ENCODE measurements at regions of chr2 and their contacts with region 1.

Region 1: DNA sequence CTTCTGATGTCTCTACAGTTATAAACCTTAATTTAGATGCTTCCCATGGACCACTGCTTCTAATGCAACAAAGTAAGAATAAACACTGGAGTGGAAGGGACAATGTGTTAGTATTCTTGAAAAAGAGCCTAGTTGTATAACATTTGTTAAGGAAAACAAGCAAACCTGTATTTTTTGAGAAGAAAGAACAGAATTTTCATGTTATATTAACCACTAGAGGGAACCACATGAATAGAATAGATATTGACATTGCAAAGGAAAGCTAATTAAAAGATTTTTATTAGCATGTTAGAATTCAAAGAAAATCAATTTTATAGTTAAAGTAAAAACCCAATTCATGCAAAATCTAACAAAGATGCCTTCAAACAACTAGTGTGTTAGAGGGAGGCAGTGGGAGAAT is 151.2 kb upstream of the BARD1 start:
- DNase-seq: peak; percentile 0
- H3K4me3 ChIP-seq: no peak overlapping the region
- H3K27ac ChIP-seq: no peak overlapping the region
- H3K4me1 ChIP-seq: no peaks in the 10 kb centered on the region
- H3K27me3 ChIP-seq: no peaks in the 10 kb centered on the region
- CTCF ChIP-seq: peak; percentile 26

Region 2: DNA sequence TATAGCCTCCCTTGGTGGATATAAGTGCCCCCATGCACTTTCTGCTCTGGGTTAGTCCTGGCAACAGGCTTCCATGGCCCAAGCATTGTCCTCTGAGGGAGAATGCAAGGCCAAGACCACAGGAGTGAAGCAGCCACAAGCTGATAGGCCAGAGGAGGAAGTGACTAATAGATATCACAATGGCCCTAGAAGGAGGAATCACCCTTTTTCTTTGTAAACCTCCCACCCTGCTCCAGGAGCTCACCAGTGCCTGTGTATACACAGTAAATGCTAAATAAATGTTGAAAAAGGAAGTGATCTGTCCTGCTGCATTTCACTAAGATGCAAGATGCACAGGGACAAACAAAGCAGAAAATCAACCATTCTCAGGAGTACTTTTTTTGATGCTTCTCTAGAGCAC is 227.4 kb after region 1 on chr2:
- CTCF ChIA-PET with region 1: interaction called, 3 read pairs
- dilution Hi-C with region 1: no loop called
- in situ Hi-C with region 1: no loop called
- intact Hi-C with region 1: loop called (anchors 2 kb)
- DNase-seq: peak; percentile 4
- H3K4me3 ChIP-seq: no peak overlapping the region
- H3K27ac ChIP-seq: no peak overlapping the region
- H3K4me1 ChIP-seq: peaks cover 35% of the 10 kb centered on the region
- H3K27me3 ChIP-seq: no peaks in the 10 kb centered on the region
- CTCF ChIP-seq: no peak

Region 3: DNA sequence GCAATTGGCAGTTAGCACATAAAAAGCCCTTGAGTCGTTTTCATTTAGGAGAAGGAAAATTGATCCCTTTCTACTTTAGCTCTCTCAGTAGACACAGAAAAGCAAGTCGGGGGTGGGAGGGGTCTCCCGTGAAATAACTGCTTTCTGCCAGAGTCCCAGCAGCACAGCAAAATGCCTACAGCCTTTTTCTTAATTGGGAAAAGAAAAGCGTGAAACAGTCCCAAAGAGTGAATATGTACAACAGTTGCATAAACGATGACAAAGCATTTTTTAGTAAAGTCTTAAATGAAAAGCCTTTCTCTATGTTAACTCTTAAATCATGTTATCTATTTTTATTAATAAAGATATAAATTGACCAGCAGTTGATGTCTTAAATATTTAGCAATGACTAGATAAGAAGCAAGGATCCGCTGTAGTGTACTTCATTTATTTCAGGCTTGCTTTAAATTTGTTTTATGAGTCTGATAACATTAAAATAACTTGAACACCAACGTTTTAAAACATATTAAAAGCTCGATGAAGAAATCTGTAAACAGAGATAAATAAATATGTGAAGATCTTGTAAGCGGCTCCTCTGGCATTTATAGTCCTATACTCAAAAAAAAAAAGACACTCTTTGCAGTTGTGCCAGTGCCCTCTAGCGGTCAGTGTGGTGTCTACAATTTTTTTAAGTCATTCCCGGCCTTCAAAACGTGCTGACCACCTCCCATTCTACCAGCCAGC is 308.9 kb after region 1 on chr2:
- CTCF ChIA-PET with region 1: no interaction called
- dilution Hi-C with region 1: no loop called
- in situ Hi-C with region 1: loop called in 1 of 2 experiments (anchors 5 kb)
- intact Hi-C with region 1: loop called (anchors 1 kb)
- DNase-seq: peak; percentile 56
- H3K4me3 ChIP-seq: no peak overlapping the region
- H3K27ac ChIP-seq: no peak overlapping the region
- H3K4me1 ChIP-seq: peaks cover 3% of the 10 kb centered on the region
- H3K27me3 ChIP-seq: no peaks in the 10 kb centered on the region
- CTCF ChIP-seq: peak; percentile 68 to 73

Region 4: GRCh38 chr2:215280326-215280725 is 319.6 kb after region 1 on chr2:
- CTCF ChIA-PET with region 1: no interaction called
- dilution Hi-C with region 1: no loop called
- in situ Hi-C with region 1: loop called in 1 of 2 experiments (anchors 25 kb)
- intact Hi-C with region 1: no loop called
- DNase-seq: peak; percentile 19
- H3K4me3 ChIP-seq: no peak overlapping the region
- H3K27ac ChIP-seq: no peak overlapping the region
- H3K4me1 ChIP-seq: peaks cover 7% of the 10 kb centered on the region
- H3K27me3 ChIP-seq: no peaks in the 10 kb centered on the region
- CTCF ChIP-seq: no peak

Region 5: DNA sequence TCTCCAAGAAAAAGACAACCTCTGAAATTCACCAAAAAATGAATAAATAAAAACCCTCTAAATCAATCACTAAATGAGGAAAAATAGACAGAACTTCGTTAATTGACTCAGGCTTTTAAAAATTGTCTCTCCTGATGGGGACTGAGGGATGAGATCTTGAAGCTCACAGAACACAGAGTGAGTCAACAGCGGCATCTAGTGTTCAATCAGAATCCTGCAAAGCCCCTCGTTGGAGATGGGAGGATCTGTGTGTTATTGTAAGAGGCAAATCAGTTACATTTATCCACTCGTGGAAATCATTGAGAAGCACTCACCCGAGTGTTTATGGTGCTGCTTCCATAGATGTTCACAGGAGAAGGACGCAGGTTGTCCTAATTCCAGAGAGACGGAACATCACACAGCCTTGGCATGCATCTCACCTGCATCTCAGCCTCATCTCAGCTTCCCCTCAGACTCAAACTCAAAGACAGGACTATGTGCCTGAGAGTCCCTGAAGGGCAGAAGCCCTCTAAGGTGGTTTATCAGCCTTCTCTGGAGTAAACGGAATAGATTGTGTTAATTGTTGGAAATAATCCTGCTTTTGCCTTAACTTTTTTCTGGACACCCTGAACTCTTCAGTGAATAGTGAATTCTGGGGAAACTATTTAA is 970.7 kb after region 1 on chr2:
- CTCF ChIA-PET with region 1: no interaction called
- dilution Hi-C with region 1: no loop called
- in situ Hi-C with region 1: no loop called
- intact Hi-C with region 1: loop called (anchors 2 kb)
- DNase-seq: peak; percentile 57
- H3K4me3 ChIP-seq: no peak overlapping the region
- H3K27ac ChIP-seq: no peak overlapping the region
- H3K4me1 ChIP-seq: peaks cover 20% of the 10 kb centered on the region
- H3K27me3 ChIP-seq: no peaks in the 10 kb centered on the region
- CTCF ChIP-seq: peak; percentile 96 to 98

Measured in mammary epithelial cell (primary cell).